ENCODE measurements at regions of chr15 and their contacts with region 1.

Region 1: DNA sequence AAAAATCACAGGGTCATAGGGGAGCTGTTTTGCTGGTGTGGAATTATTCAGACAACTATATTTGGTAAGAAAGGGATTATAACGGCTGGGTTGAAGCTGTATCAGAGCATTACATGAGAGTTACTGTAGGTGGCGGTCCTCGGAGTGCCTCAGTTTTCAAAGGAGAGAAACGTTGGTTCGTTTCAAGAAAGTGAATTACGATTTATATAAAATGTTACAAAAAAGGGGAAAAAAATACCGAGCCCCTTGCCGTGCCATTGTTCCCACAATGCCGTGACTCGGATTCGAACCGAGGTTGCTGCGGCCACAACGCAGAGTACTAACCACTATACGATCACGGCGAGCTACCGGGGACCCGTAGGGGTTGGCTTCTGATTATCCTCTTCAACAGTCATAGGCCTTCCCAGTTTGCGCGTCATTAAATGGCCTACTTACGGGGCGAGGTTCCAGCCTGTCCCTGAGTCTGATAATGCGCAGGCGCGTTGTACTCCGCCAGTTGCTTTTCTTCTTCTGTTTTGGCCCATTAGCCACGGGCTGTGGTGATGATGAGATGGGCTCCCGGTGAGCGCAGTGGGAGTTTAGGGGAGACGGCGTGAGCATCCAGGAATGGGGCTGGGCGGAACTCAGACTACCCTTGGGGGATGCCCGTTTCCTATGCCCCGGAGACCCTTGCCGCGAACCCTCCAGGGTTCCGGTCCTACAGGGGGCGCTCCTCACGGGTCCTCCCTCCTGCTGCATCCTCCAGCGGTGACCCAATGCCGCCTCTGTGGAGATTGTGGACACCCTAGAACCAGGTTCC is 10.8 kb upstream of the SHF start:
- DNase-seq: peak; percentile 96
- H3K4me3 ChIP-seq: peak overlapping the region; percentile 55 to 58
- H3K27ac ChIP-seq: peak overlapping the region; percentile 99
- H3K4me1 ChIP-seq: no peaks in the 10 kb centered on the region
- H3K27me3 ChIP-seq: no peaks in the 10 kb centered on the region
- CTCF ChIP-seq: peak; percentile 65 to 86 (median 80)
- POLR2A ChIP-seq: peak; percentile 89

Region 2: DNA sequence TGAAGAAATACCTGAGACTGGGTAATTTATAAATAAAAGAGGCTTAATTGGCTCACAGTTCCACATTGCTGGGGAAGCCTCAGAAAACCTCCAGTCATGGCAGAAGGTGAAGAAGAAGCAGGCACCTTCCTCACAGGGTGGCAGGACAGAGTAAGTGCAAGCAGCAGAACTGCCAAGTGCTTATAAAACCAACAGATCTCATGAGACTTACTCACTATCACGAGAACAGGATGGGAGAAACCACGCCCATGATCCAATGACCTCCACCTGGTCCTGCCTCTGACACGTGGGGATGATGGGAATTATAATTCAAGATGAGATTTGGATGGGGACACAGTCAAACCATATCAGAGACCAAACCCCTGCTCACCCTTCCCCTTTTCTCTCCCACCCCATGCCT is 387.2 kb before region 1 on chr15:
- intact Hi-C with region 1: no loop called
- DNase-seq: no peak
- H3K4me3 ChIP-seq: no peak overlapping the region
- H3K27ac ChIP-seq: peak overlapping the region; percentile 36 to 67
- H3K4me1 ChIP-seq: no peaks in the 10 kb centered on the region
- H3K27me3 ChIP-seq: no peaks in the 10 kb centered on the region
- CTCF ChIP-seq: no peak
- POLR2A ChIP-seq: no peak

Region 3: GRCh38 chr15:45022871-45023658 is 175.5 kb before region 1 on chr15 and contains the start of gene SORD:
- intact Hi-C with region 1: no loop called
- DNase-seq: peak; percentile 92
- H3K4me3 ChIP-seq: peak within 1 kb of the TSS; percentile 59 to 64
- H3K27ac ChIP-seq: peak within 1 kb of the TSS; percentile 84 to 87
- H3K4me1 ChIP-seq: no peaks in the 10 kb centered on the region
- H3K27me3 ChIP-seq: no peaks in the 10 kb centered on the region
- CTCF ChIP-seq: no peak
- POLR2A ChIP-seq: peak; percentile 64
- total RNA-seq, gene SORD: 197 to 593 TPM

Region 4: DNA sequence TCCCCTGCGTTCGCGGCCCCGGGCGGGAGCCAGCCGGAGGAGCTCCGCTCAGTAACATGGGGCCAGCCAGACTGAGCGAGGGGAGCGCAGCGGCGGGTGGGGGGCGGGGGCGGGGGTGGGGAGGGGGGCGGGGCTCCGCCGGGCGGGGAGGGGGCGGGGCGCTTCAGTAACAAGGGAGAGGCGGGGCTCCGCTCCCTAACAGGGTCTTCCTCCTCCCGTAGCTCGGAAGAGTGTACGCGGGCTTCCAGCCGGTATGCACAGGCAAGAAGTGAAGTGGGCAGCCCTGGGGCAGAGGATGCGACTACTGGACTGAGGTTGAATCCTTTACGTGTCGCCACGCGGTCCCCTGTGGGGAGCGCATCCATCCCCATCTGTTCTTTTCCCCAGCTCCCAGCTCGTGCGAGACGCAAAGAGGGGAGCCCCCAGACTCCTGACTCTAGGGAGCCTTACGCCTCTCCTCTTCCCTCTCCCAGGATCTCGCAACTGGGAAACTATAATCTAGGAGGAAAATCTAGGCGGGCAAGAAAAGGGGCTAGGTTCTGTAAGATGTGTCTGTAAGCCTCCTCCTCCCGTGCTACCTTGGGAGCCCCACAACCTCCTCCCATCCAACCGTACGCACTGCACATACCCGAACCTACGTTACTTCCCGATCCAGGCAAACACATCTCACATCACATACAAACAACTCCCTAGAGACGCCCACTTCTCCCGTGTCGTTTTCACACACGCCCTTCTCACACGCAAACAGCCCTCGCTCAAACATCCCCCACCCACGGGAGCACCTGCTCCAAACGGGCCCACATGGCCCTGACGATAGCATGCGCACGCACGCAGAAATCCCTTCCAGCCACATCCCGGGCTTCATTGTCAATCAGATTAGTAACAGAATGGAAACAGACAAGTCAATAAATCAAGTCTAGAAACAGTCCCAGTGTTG is 10.4 kb before region 1 on chr15 and contains the start of gene SHF:
- intact Hi-C with region 1: loop called (anchors 2 kb)
- DNase-seq: peak; percentile 59
- H3K4me3 ChIP-seq: peak within 1 kb of the TSS; percentile 68 to 75
- H3K27ac ChIP-seq: peak within 1 kb of the TSS; percentile 77 to 80
- H3K4me1 ChIP-seq: peaks cover 4% of the 10 kb centered on the region
- H3K27me3 ChIP-seq: no peaks in the 10 kb centered on the region
- CTCF ChIP-seq: no peak
- POLR2A ChIP-seq: peak; percentile 53
- total RNA-seq, gene SHF: 11.2 to 13.7 TPM

Region 5: GRCh38 chr15:45378149-45378912 is 179.8 kb after region 1 on chr15 and contains the start of gene GATM:
- intact Hi-C with region 1: loop called (anchors 5 kb)
- DNase-seq: peak; percentile 58
- H3K4me3 ChIP-seq: peak within 1 kb of the TSS; percentile 43 to 45
- H3K27ac ChIP-seq: peak within 1 kb of the TSS; percentile 48 to 69
- H3K4me1 ChIP-seq: no peaks in the 10 kb centered on the region
- H3K27me3 ChIP-seq: no peaks in the 10 kb centered on the region
- CTCF ChIP-seq: peak in 2 of 4 experiments; percentile 35 to 47
- POLR2A ChIP-seq: no peak
- total RNA-seq, gene GATM: 12.9 to 254 TPM